Natural killer cell (primary cell): ENCODE measurements at regions of chr1 and their contacts with region 1.

Region 1: GRCh38 chr1:155127105-155127964 is at the start of gene EFNA1:
- DNase-seq: peak; percentile 40 to 64
- ATAC-seq: peak; percentile 41 to 48 (median 43)
- H3K4me3 ChIP-seq: peak within 1 kb of the TSS; percentile 42
- H3K4me3 Mint-ChIP-seq: peak within 1 kb of the TSS; percentile 93
- H3K27ac ChIP-seq: no peak within 1 kb of the TSS
- H3K27ac Mint-ChIP-seq: peak within 1 kb of the TSS; percentile 74 to 87
- H3K4me1 ChIP-seq: peaks cover 34% of the 10 kb centered on the region
- H3K4me1 Mint-ChIP-seq: peaks cover 22 to 40% of the 10 kb centered on the region in 2 donors
- H3K27me3 ChIP-seq: peaks cover 25% of the 10 kb centered on the region
- H3K27me3 Mint-ChIP-seq: peaks cover 23 to 35% of the 10 kb centered on the region in 2 donors
- CTCF ChIP-seq: no peak
- total RNA-seq, gene EFNA1: 1.5 to 1.9 (median 1.9) TPM

Region 2: GRCh38 chr1:155091071-155091709 is 36.1 kb before region 1 on chr1:
- intact Hi-C with region 1: loop called (anchors 5 kb)
- DNase-seq: peak; percentile 76 to 89
- ATAC-seq: peak; percentile 75 to 97 (median 90)
- H3K4me3 ChIP-seq: no peak overlapping the region
- H3K4me3 Mint-ChIP-seq: no peak overlapping the region
- H3K27ac ChIP-seq: no peak overlapping the region
- H3K27ac Mint-ChIP-seq: no peak overlapping the region
- H3K4me1 ChIP-seq: peaks cover 12% of the 10 kb centered on the region
- H3K4me1 Mint-ChIP-seq: peaks cover 0 to 4% of the 10 kb centered on the region in 2 donors
- H3K27me3 ChIP-seq: no peaks in the 10 kb centered on the region
- H3K27me3 Mint-ChIP-seq: peaks cover 5 to 17% of the 10 kb centered on the region in 2 donors
- CTCF ChIP-seq: peak; percentile 97

Region 3: DNA sequence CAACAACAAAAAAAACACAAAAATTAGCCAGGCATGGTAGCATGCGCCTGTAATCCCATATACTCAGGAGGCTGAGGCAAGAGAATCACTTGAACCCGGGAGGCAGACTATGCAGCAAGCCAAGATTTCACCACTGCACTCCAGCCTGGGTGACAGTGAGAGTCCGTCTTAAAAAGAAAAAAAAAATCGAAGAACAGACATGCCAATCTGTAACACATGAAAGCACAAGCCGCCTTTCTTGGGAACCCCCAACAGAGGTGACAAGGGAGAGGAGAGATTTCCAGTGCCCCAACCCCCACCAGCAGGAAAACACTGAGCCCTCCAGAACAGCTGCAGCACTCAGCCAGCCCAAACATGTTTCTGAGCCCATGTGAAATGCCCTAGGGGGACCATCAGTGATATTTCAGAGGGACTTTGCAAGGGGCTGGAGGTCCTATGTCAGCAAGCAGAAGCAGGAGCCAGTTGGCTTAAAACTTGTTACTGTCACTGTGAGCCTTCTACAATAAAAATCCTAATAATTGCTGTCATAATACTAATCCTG is 13.8 kb before region 1 on chr1:
- intact Hi-C with region 1: no loop called
- DNase-seq: no peak
- ATAC-seq: no peak
- H3K4me3 ChIP-seq: no peak overlapping the region
- H3K4me3 Mint-ChIP-seq: no peak overlapping the region
- H3K27ac ChIP-seq: no peak overlapping the region
- H3K27ac Mint-ChIP-seq: no peak overlapping the region
- H3K4me1 ChIP-seq: no peaks in the 10 kb centered on the region
- H3K4me1 Mint-ChIP-seq: no peaks in the 10 kb centered on the region
- H3K27me3 ChIP-seq: no peaks in the 10 kb centered on the region
- H3K27me3 Mint-ChIP-seq: peaks cover 0 to 11% of the 10 kb centered on the region in 2 donors
- CTCF ChIP-seq: no peak

Region 4: DNA sequence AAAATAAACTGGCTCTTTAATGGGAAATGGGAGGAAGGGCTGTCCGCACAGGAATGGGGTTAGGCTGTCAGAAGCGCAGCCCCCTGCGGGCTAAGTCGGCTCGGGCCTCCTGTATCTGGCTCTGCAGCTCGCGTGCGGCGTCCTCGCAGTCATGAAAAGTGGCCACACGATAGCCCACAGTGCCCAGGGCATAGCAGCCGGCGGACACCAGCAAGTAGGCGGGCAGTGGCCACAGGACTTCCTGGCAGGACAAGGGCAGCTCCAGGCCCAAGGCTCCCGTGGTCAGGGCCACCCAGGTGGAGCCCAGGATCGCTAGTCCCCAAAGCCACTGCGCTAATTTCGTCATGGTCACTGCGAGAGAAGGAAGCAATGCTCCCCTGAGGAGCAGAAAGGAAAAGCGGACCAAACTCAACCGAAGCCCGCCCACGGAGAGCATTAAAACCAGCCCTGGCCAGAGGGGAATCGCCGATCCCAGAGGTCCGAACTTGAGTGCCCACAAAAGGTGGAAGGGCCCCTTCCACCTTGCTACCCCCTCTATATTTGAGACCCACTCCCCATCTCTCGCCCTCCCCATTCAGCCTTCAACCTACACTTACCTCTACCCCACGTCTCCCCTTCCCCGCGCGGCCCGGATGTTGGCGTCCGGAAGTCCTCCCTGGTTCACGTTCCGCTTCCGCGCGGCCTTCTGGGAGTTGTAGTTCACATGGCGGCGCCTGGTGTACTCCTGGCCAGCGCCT is 12.7 kb after region 1 on chr1 and contains the start of gene DPM3:
- intact Hi-C with region 1: loop called (anchors 2 kb)
- DNase-seq: peak; percentile 80 to 92
- ATAC-seq: peak; percentile 63 to 72 (median 68)
- H3K4me3 ChIP-seq: peak within 1 kb of the TSS; percentile 81
- H3K4me3 Mint-ChIP-seq: peak within 1 kb of the TSS; percentile 96
- H3K27ac ChIP-seq: peak within 1 kb of the TSS; percentile 78
- H3K27ac Mint-ChIP-seq: peak within 1 kb of the TSS; percentile 97 to 99
- H3K4me1 ChIP-seq: peaks cover 35% of the 10 kb centered on the region
- H3K4me1 Mint-ChIP-seq: peaks cover 17 to 41% of the 10 kb centered on the region in 2 donors
- H3K27me3 ChIP-seq: no peaks in the 10 kb centered on the region
- H3K27me3 Mint-ChIP-seq: peaks cover 0 to 2% of the 10 kb centered on the region in 2 donors
- CTCF ChIP-seq: no peak
- total RNA-seq, gene DPM3: 26.8 to 45.7 (median 41.5) TPM

Region 5: DNA sequence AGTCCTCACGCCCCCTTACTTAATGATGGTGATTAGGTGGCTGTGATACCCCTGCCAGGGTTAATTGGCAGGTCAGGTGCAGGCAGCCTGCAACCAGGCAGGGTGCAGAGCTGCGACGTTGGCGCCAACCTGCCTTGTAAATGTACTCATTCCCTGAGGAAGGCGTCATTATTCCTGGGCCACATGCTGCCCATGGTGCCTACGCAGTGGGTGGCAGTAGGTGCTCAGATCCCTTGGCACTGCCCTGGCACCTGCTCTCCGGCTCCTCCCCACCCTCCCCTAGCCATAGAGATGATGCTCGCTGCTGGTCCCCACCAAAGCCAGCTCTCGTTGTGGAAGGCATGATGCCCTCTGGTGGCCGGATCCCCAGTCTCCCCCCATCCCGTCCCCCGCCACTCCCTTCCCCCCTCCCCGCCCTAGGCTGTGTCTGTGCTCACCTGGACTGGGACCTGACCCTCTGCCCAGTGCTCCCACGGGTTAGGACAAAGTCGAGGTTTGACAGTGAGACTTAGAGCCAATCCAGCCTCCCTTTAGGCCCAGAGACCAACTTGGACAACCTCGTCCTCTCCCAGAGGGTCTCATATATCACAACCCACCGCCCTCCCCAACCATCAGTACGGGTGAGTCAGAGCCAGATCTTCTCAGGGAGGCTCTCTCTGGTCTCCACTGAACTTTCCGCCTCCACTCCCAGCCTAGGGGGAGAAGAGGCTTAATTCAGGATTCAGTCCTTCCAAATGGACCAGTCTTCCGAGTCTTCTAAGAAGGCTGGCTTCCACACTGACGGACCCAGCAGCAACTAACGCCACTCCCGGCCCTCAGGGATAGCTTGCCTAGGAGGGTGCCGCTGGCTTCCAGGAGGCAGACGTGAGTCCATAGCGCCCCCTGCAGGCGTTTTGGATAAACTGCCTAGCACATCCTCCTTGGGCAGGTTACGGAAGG is 40.1 kb after region 1 on chr1:
- intact Hi-C with region 1: loop called (anchors 5 kb)
- DNase-seq: peak; percentile 82 to 93
- ATAC-seq: peak; percentile 81 to 87 (median 85)
- H3K4me3 ChIP-seq: peak overlapping the region; percentile 13
- H3K4me3 Mint-ChIP-seq: peak overlapping the region; percentile 4
- H3K27ac ChIP-seq: no peak overlapping the region
- H3K27ac Mint-ChIP-seq: peak overlapping the region in 1 of 2 donors; percentile 68
- H3K4me1 ChIP-seq: peaks cover 20% of the 10 kb centered on the region
- H3K4me1 Mint-ChIP-seq: peaks cover 7 to 21% of the 10 kb centered on the region in 2 donors
- H3K27me3 ChIP-seq: peaks cover 2% of the 10 kb centered on the region
- H3K27me3 Mint-ChIP-seq: peaks cover 0 to 7% of the 10 kb centered on the region in 2 donors
- CTCF ChIP-seq: peak; percentile 84